Esophagus muscularis mucosa (tissue), 4 donors: ENCODE measurements at regions of chr14 and their contacts with region 1.

Region 1: GRCh38 chr14:61025251-61026223 is 44.5 kb downstream of the SLC38A6 start:
- DNase-seq: no peak
- H3K4me3 ChIP-seq: no peak overlapping the region
- H3K27ac ChIP-seq: no peak overlapping the region
- H3K4me1 ChIP-seq: peaks cover 0 to 5% (median 0%) of the 10 kb centered on the region in 4 donors
- H3K27me3 ChIP-seq: no peaks in the 10 kb centered on the region
- CTCF ChIP-seq: peak; percentile 82 to 88 (median 86)
- EP300 ChIP-seq: no peak
- POLR2A ChIP-seq: no peak

Region 2: DNA sequence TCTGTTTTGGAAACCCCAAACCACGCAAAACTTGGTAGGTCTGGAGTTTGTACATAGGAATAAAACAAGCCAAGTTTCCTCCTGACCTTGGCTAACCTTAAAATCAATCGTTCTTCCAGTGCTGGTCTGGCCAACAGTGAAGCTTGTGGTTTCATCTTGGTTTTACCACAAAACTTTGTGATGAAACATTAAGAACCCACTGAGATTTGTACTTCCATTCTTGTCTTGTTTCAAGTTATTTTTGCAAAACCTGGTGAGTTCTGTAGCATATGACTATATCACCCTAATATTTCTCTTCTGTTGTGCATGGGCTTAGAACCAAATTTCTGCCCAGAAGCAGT is 402.6 kb before region 1 on chr14:
- intact Hi-C with region 1: loop called (anchors 2 kb)
- DNase-seq: no peak
- H3K4me3 ChIP-seq: no peak overlapping the region
- H3K27ac ChIP-seq: no peak overlapping the region
- H3K4me1 ChIP-seq: peaks cover 0 to 4% (median 0%) of the 10 kb centered on the region in 4 donors
- H3K27me3 ChIP-seq: peaks cover 0 to 8% (median 0%) of the 10 kb centered on the region in 4 donors
- CTCF ChIP-seq: no peak
- EP300 ChIP-seq: no peak
- POLR2A ChIP-seq: no peak

Region 3: DNA sequence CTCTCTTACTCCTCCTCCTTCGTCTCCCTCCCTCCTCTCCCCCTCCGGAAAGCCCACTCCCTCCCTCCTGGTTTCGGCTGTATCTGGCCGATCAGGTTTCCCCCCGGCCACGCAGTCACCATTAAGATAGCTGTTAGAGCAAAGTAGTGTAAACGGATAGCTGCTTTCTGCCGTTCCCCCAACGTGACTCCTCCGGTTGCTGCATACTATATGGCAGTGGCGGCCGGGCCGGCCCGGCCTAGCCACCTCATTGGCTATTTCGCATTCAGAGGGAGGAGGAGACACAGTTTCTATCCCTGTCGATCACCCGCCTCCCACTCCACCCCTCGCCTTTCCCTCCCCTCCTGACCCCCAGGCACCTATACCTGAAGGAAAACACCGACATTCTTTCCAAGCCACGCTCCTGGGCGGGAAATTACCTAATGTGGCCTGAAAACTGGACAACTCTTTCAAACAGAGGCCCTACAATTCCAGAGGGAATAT is 301.4 kb before region 1 on chr14 and contains the start of gene SIX4:
- intact Hi-C with region 1: loop called (anchors 5 kb)
- DNase-seq: no peak
- H3K4me3 ChIP-seq: peak within 1 kb of the TSS; percentile 71 to 82 (median 76)
- H3K27ac ChIP-seq: peak within 1 kb of the TSS; percentile 69 to 84 (median 72)
- H3K4me1 ChIP-seq: peaks cover 20 to 36% (median 25%) of the 10 kb centered on the region in 4 donors
- H3K27me3 ChIP-seq: peaks cover 0 to 32% (median 0%) of the 10 kb centered on the region in 4 donors
- CTCF ChIP-seq: no peak
- EP300 ChIP-seq: no peak
- POLR2A ChIP-seq: no peak
- total RNA-seq, gene SIX4: 1.7 to 4.2 (median 2.7) TPM

Region 4: GRCh38 chr14:61252369-61253063 is 227.0 kb after region 1 on chr14:
- intact Hi-C with region 1: loop called (anchors 2 kb)
- DNase-seq: peak; percentile 95
- H3K4me3 ChIP-seq: no peak overlapping the region
- H3K27ac ChIP-seq: no peak overlapping the region
- H3K4me1 ChIP-seq: peaks cover 0 to 12% (median 0%) of the 10 kb centered on the region in 4 donors
- H3K27me3 ChIP-seq: no peaks in the 10 kb centered on the region
- CTCF ChIP-seq: peak; percentile 77 to 83 (median 78)
- EP300 ChIP-seq: no peak
- POLR2A ChIP-seq: no peak

Region 5: GRCh38 chr14:61452452-61452851 is 426.9 kb after region 1 on chr14:
- intact Hi-C with region 1: no loop called
- DNase-seq: peak; percentile 31
- H3K4me3 ChIP-seq: no peak overlapping the region
- H3K27ac ChIP-seq: no peak overlapping the region
- H3K4me1 ChIP-seq: peaks cover 0 to 9% (median 8%) of the 10 kb centered on the region in 4 donors
- H3K27me3 ChIP-seq: no peaks in the 10 kb centered on the region
- CTCF ChIP-seq: no peak
- EP300 ChIP-seq: no peak
- POLR2A ChIP-seq: no peak